ENCODE measurements at regions of chr12 and their contacts with region 1.

Region 1: DNA sequence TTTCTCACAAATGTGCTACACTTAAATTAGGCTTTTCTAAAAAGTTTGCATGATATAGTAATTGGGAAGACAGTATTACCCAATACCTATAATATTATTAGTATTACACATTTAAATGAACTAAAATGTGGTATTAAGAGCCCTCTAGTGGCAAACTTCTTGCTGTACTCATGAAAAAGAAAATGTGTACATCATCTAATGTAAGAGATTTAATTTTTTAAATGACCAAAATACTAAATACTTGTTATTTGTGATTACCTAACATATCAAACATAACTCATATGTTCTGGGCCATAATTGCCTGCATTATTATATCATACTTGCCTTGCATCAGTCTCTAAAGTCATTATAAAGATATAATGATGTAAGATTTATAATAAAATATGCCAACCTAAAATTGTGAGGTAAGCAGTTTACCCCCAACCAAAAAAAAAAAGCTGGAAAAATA is 64.2 kb downstream of the DNAI7 start:
- DNase-seq: no peak
- H3K4me3 ChIP-seq: no peak overlapping the region
- CTCF ChIP-seq: no peak
- POLR2A ChIP-seq: no peak

Region 2: DNA sequence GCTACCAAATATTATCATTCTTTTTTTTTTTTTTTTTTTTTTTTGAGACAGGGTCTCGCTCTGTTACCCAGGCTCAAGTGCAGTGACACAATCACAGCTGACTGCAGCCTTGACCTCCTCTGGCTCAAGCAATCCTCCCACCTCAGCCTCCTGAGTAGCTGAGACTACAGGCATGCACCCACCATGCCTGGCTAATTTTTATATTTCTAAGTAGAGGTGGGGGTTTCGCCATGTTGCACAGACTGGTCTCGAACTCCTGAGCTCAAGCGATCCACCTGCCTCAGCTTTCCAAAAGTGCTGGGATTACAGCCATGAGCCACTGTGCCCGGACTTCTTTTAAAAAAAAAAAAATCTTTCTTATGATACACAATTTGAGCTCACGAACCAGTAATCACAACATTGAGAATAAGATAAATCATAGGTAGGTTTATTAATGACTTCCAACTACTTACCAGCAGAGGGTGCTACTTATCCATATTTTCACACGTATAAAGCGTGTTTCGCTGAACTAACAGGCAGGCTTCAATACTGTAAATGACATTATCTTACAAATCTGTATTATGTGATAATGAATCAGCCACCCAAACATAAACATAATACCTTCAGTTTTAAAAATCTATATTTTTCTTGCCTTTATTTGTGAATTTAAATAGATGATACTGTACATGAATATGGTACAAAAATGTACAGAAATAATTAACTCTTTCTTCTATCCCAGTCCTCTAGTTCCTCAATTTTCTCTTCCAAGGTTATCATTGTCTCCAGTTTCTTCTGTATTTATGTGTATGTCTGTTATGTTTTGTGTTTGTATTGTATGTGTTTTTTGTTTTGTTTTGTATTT is 139.3 kb before region 1 on chr12:
- intact Hi-C with region 1: loop called (anchors 2 kb)
- DNase-seq: no peak
- H3K4me3 ChIP-seq: no peak overlapping the region
- CTCF ChIP-seq: no peak
- POLR2A ChIP-seq: no peak